ENCODE measurements at regions of chr9 and their contacts with region 1.

Region 1: DNA sequence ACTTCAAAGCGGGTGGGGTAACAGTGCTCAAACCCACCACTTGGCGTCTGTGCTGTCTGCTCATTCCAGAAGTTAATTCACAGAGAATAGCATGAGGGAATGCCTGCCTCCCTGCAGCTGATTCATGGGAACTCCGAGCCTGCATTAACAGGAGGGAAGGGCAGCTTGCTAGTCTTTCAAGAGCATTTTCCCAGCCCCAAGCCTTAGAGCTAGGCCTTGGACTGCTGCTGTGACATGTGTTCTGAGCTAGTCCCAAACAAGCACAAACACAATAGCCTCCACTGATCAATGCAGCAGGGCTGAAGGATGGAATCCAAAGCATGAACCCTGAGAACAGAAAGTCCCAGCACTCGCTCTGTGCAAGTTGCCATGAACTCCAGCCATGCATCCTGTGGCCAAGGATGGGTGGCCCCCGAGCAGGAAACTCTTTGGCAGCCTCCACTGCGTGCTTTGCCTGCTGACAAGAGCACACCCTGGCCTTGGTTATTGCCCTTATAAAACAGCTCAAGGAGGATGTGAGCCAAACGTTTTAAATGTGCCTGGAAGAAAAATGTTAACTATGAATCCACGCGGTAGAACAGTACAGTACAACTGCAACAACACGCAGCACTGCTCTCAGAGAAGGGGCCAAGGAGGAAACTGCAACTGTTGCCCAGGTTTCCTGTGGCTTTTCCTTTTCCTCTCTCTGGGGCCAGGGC is 653.1 kb upstream of the KLF4 start:
- DNase-seq: peak; percentile 72 to 76
- ATAC-seq: peak; percentile 95 to 99 (median 98)
- H3K4me3 ChIP-seq: no peak overlapping the region
- H3K27ac ChIP-seq: peak overlapping the region; percentile 39 to 88 (median 84)
- H3K4me1 ChIP-seq: peaks cover 8 to 29% (median 21%) of the 10 kb centered on the region in 9 donors
- H3K27me3 ChIP-seq: no peaks in the 10 kb centered on the region
- CTCF ChIP-seq: peak in 2 of 9 donors; percentile 10 to 22

Region 2: DNA sequence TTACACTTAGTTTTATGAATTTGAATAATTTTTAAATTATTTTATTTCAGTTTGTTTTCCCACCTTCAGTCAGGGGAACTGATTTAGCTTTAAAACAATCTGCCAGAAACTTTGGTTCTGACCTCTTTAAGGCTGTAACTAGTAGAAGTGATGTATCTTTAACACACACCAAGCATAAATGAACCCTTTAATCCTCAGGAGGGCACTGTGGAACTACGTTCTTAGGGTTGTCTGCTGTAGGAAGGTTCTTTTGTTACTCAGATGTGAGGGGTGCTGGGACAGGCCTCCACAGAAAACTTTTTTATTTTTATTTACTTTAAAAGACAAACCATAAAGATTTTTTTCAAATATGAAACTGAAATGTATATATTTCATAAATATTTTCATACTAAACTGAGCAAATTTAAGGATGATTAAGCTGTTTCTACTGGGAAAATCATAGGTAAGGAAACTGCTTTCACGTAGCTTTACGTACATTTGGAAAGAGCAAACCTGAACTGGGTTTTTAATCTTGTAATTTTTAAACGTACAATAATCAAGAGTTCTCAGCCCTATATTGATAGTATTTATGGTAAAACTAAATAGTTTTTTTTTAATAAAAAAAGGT is 658.4 kb before region 1 on chr9:
- intact Hi-C with region 1: loop called in 5 of 10 experiments (anchors 2 to 10 kb)
- DNase-seq: peak in 1 of 2 donors; percentile 55
- ATAC-seq: peak; percentile 22 to 65 (median 52)
- H3K4me3 ChIP-seq: peak overlapping the region in 8 of 10 donors; percentile 60 to 94 (median 80)
- H3K27ac ChIP-seq: peak overlapping the region in 5 of 10 donors; percentile 3 to 98 (median 98)
- H3K4me1 ChIP-seq: peaks cover 0 to 61% (median 6%) of the 10 kb centered on the region in 9 donors
- H3K27me3 ChIP-seq: peaks cover 0 to 27% (median 0%) of the 10 kb centered on the region in 7 donors
- CTCF ChIP-seq: peak; percentile 27 to 78 (median 62)

Region 3: GRCh38 chr9:107637421-107638420 is 504.9 kb before region 1 on chr9:
- intact Hi-C with region 1: loop called in 2 of 10 experiments (anchors 5 to 10 kb)
- DNase-seq: peak; percentile 89 to 97
- ATAC-seq: peak; percentile 92 to 97 (median 94)
- H3K4me3 ChIP-seq: peak overlapping the region; percentile 11 to 60 (median 47)
- H3K27ac ChIP-seq: peak overlapping the region; percentile 88 to 100 (median 98)
- H3K4me1 ChIP-seq: peaks cover 2 to 44% (median 16%) of the 10 kb centered on the region in 9 donors
- H3K27me3 ChIP-seq: no peaks in the 10 kb centered on the region
- CTCF ChIP-seq: peak in 6 of 9 donors; percentile 22 to 52 (median 42)

Region 4: DNA sequence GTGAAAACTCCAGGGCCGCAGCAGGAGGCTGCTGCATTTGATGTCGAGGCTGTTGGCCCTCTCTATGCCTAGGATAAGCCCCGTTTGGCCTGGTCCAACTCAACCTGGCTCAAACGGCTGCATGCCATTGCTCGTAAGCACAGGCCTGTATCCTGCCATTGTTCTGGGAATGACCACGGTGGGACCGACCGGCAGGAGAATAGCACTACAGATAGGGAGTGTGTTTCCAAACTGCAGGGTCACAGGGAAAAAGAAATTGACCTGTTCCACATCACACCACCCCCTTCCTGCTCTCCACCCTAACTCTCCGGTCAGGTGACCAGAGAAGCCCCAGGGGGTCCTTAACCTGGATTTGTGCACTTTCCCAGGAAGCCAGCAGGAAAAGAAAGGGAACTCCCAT is 374.4 kb before region 1 on chr9:
- intact Hi-C with region 1: loop called in 1 of 10 experiments (anchors 1 kb)
- DNase-seq: peak; percentile 31 to 76
- ATAC-seq: peak; percentile 92 to 97 (median 95)
- H3K4me3 ChIP-seq: no peak overlapping the region
- H3K27ac ChIP-seq: peak overlapping the region in 8 of 10 donors; percentile 46 to 80 (median 64)
- H3K4me1 ChIP-seq: peaks cover 0 to 24% (median 18%) of the 10 kb centered on the region in 9 donors
- H3K27me3 ChIP-seq: no peaks in the 10 kb centered on the region
- CTCF ChIP-seq: no peak

Region 5: GRCh38 chr9:108125625-108126024 is 17.0 kb before region 1 on chr9:
- intact Hi-C with region 1: loop called in 1 of 10 experiments (anchors 1 kb)
- DNase-seq: peak in 1 of 2 donors; percentile 17
- ATAC-seq: no peak
- H3K4me3 ChIP-seq: no peak overlapping the region
- H3K27ac ChIP-seq: no peak overlapping the region
- H3K4me1 ChIP-seq: no peaks in the 10 kb centered on the region
- H3K27me3 ChIP-seq: no peaks in the 10 kb centered on the region
- CTCF ChIP-seq: peak in 5 of 9 donors; percentile 3 to 47 (median 21)

Region 6: GRCh38 chr9:108423433-108423832 is 280.8 kb after region 1 on chr9:
- intact Hi-C with region 1: no loop called
- DNase-seq: no peak
- ATAC-seq: no peak
- H3K4me3 ChIP-seq: no peak overlapping the region
- H3K27ac ChIP-seq: no peak overlapping the region
- H3K4me1 ChIP-seq: no peaks in the 10 kb centered on the region
- H3K27me3 ChIP-seq: no peaks in the 10 kb centered on the region
- CTCF ChIP-seq: no peak